G401 (cell line): ENCODE measurements at regions of chr12 and their contacts with region 1.

Region 1: GRCh38 chr12:12327802-12328201 is 22.2 kb downstream of the MANSC1 start:
- DNase-seq: peak; percentile 69

Region 2: DNA sequence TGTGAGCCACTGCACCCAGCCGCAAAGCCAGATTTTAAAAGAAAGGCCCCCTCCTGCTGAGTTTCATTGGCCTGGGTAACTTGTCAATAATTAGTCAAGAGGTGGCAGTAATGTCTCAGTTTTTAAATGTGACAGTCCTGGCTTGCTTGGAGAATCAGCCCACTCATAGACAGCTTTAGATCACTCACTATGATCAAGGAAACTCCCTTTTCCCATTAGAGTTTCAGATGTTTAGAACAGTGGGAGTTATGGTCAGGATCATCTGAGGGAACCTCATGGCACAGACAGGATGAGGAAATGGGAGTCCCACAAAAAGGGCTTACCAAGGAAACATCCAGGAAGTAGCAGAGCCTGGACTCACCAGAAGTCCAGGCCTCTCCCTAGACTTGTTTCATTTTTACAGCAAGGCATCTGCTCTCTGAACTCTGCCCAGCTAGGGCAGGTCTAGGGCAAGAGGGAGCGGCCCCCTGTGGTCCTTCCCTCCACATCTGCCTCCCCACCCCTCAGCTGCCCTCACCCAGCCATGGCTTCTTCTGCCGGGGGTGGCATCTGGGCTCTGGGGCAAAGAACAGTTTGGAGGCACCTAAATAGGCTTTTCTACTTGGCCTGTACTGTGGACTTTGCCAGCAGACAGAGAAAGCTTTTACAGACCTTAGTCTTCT is 245.8 kb before region 1 on chr12:
- in situ Hi-C with region 1: loop called (anchors 5 kb)
- DNase-seq: peak; percentile 36

Region 3: DNA sequence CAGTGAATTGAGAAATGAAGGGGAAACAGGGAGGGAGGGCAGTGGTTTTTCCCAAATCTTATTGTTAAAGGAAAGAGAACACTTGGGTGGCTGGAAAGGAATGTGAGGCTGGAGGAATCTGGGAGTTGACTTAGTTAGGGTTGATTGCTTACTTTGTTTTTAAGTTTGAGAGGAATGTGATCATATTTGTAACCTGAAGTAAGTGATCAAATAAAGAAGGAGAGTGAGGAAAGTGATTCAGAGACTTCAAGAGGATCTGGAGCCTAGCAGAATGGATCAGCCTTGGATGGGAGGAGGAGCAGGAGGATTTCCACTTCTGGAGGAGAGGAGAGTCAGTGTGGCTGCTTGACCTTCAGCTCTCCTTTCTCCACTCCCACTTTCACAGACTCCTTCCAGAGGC is 54.9 kb before region 1 on chr12:
- in situ Hi-C with region 1: no loop called
- DNase-seq: no peak